Activated naive CD8-positive, alpha-beta T cell treated with anti-CD3 and anti-CD28 coated beads, Interleukin-2, amount 10 ng/mL, durations not matched to agents 7 days and 5 days (primary cell): ENCODE measurements at regions of chr1 and their contacts with region 1.

Region 1: DNA sequence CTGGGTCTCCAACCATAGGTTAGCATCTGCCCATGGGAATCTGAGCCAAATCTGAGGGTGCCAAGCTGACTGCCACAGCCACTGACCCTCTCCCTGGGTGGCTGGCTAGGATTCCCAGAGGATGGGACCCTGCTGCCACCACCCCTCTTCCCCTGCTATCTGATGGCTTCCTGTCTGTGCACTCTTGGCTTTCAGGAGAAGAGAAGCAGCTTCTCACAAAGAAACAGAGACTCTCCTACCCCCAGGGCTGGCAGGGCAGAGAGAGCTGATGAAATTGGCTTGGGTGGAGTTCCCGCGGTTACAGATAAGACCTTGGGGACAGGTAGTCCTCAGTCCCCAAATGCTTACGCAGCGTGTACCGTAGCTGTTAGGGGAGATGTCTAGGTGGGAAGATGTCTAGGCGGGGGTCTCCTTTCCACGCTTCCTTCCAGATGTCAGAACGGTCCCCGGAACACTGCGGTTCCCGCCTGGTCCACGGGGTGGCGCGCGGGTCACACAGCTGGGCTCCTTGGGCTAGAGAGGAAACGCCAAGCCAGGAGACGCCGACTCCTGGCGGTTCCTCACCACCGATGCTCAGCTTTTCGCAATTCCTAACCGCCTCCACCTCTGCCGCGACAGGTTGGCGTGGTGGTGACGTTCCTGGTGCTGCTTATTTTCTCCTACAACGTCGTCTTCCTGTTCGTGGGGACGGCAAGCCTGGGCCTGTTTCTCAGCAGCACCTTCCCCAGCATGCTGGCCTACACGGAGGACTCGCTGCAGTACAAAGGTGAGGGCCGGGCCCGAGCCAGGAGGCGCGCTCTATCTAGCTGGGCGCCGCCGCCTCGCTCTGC is 40.1 kb downstream of the ELK4 start:
- DNase-seq: peak; percentile 95
- ATAC-seq: peak; percentile 86
- H3K4me3 Mint-ChIP-seq: peak overlapping the region; percentile 89
- H3K27ac Mint-ChIP-seq: peak overlapping the region; percentile 94
- H3K4me1 Mint-ChIP-seq: peaks cover 25% of the 10 kb centered on the region
- H3K27me3 Mint-ChIP-seq: no peaks in the 10 kb centered on the region

Region 2: GRCh38 chr1:205578780-205579606 is 12.7 kb before region 1 on chr1:
- POLR2A ChIA-PET with region 1: no interaction called
- DNase-seq: no peak
- ATAC-seq: no peak
- H3K4me3 Mint-ChIP-seq: no peak overlapping the region
- H3K27ac Mint-ChIP-seq: no peak overlapping the region
- H3K4me1 Mint-ChIP-seq: peaks cover 16% of the 10 kb centered on the region
- H3K27me3 Mint-ChIP-seq: peaks cover 8% of the 10 kb centered on the region

Region 3: GRCh38 chr1:205631727-205632373 is 40.1 kb after region 1 on chr1 and contains the start of gene ELK4:
- POLR2A ChIA-PET with region 1: interaction called, 184 read pairs
- DNase-seq: peak; percentile 99
- ATAC-seq: peak; percentile 81
- H3K4me3 Mint-ChIP-seq: peak within 1 kb of the TSS; percentile 96
- H3K27ac Mint-ChIP-seq: peak within 1 kb of the TSS; percentile 99
- H3K4me1 Mint-ChIP-seq: peaks cover 30% of the 10 kb centered on the region
- H3K27me3 Mint-ChIP-seq: no peaks in the 10 kb centered on the region
- total RNA-seq, gene ELK4: 124 to 141 TPM

Region 4: GRCh38 chr1:205658943-205659581 is 67.3 kb after region 1 on chr1:
- POLR2A ChIA-PET with region 1: interaction called, 34 read pairs
- DNase-seq: peak; percentile 81
- ATAC-seq: peak; percentile 88
- H3K4me3 Mint-ChIP-seq: no peak overlapping the region
- H3K27ac Mint-ChIP-seq: no peak overlapping the region
- H3K4me1 Mint-ChIP-seq: peaks cover 2% of the 10 kb centered on the region
- H3K27me3 Mint-ChIP-seq: peaks cover 14% of the 10 kb centered on the region